Pancreas (tissue), 10 donors: ENCODE measurements at regions of chr15 and their contacts with region 1.

Region 1: GRCh38 chr15:40274350-40275274 is 8.3 kb downstream of the ANKRD63 start:
- DNase-seq: peak; percentile 62 to 96 (median 86)
- ATAC-seq: peak; percentile 66 to 87 (median 82)
- H3K4me3 ChIP-seq: no peak overlapping the region
- H3K27ac ChIP-seq: no peak overlapping the region
- H3K4me1 ChIP-seq: peaks cover 0 to 3% (median 0%) of the 10 kb centered on the region in 3 donors
- H3K27me3 ChIP-seq: no peaks in the 10 kb centered on the region
- CTCF ChIP-seq: peak; percentile 100

Region 2: GRCh38 chr15:40222131-40222530 is 52.5 kb before region 1 on chr15:
- intact Hi-C with region 1: loop called in 2 of 3 experiments (anchors 2 to 5 kb)
- DNase-seq: no peak
- ATAC-seq: no peak
- H3K4me3 ChIP-seq: no peak overlapping the region
- H3K27ac ChIP-seq: no peak overlapping the region
- H3K4me1 ChIP-seq: no peaks in the 10 kb centered on the region
- H3K27me3 ChIP-seq: no peaks in the 10 kb centered on the region
- CTCF ChIP-seq: no peak

Region 3: GRCh38 chr15:40427188-40427587 is 152.6 kb after region 1 on chr15:
- intact Hi-C with region 1: loop called in 1 of 3 experiments (anchors 5 kb)
- DNase-seq: no peak
- ATAC-seq: peak in 2 of 4 donors; percentile 29 to 39
- H3K4me3 ChIP-seq: no peak overlapping the region
- H3K27ac ChIP-seq: no peak overlapping the region
- H3K4me1 ChIP-seq: peaks cover 0 to 5% (median 0%) of the 10 kb centered on the region in 3 donors
- H3K27me3 ChIP-seq: no peaks in the 10 kb centered on the region
- CTCF ChIP-seq: no peak